ENCODE measurements at regions of chr10 and their contacts with region 1.

Region 1: GRCh38 chr10:96129387-96130325 is at the start of gene ZNF518A:
- DNase-seq: peak; percentile 79 to 97 (median 87)
- ATAC-seq: peak; percentile 82
- H3K4me3 ChIP-seq: peak within 1 kb of the TSS; percentile 67
- H3K4me3 Mint-ChIP-seq: peak within 1 kb of the TSS; percentile 93
- H3K27ac ChIP-seq: peak within 1 kb of the TSS; percentile 93 to 98
- H3K27ac Mint-ChIP-seq: peak within 1 kb of the TSS; percentile 99
- H3K4me1 ChIP-seq: peaks cover 14% of the 10 kb centered on the region
- H3K4me1 Mint-ChIP-seq: peaks cover 27% of the 10 kb centered on the region
- H3K27me3 ChIP-seq: peaks cover 7 to 36% of the 10 kb centered on the region in 2 experiments
- H3K27me3 Mint-ChIP-seq: peaks cover 62% of the 10 kb centered on the region
- CTCF ChIP-seq: no peak
- total RNA-seq, gene ZNF518A: 7.4 to 7.9 TPM

Region 2: DNA sequence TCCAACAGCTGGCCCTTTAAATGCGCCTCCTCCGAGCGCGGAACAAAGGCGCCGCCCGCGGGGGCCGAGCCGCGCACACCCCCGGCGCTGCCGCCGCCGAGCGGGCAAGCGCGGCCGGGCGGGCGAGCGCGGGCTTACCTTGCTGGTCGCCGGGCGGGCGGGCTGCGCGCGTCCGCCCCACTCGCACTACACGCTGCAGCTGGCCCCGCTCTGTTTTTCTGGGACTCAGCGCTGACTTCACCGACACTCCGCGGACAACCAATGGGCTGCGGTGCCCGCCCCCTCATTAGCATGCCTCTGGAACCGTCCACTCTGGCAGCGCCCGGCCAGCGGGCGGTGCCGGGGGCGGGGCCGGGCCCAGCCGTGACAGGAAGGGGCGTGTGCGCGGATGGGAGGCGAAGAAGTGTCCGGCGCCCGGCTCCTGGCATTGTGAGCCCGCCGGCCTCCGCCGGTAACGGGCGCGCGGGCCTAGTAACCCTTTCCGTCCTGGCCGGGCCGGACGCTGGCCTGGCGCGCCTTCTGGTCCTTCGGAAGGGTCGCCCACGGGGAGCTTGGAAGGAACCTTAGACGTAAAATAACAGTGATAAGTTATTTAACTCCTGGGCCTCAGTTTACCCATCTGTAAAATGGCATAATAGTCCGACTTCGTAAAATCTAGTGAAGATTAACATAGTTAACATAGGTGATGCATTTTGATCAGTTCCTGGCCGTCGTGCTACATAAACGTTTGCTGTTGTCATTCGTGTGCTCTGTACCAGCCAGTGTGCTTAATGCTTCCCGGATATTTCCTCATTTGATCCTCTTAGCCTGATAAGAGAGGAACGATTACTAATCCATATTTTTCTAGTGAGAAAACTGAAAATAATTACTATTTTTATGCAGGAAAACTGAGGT is 568.2 kb before region 1 on chr10 and contains the start of gene SORBS1:
- CTCF ChIA-PET with region 1: no interaction called
- POLR2A ChIA-PET with region 1: no interaction called
- intact Hi-C with region 1: loop called in 1 of 2 experiments (anchors 5 kb)
- DNase-seq: peak; percentile 64 to 95 (median 80)
- ATAC-seq: peak; percentile 98
- H3K4me3 ChIP-seq: peak within 1 kb of the TSS; percentile 96
- H3K4me3 Mint-ChIP-seq: peak within 1 kb of the TSS; percentile 100
- H3K27ac ChIP-seq: no peak within 1 kb of the TSS
- H3K27ac Mint-ChIP-seq: peak within 1 kb of the TSS; percentile 72
- H3K4me1 ChIP-seq: peaks cover 14% of the 10 kb centered on the region
- H3K4me1 Mint-ChIP-seq: peaks cover 16% of the 10 kb centered on the region
- H3K27me3 ChIP-seq: peaks cover 0 to 3% of the 10 kb centered on the region in 2 experiments
- H3K27me3 Mint-ChIP-seq: no peaks in the 10 kb centered on the region
- CTCF ChIP-seq: no peak
- total RNA-seq, gene SORBS1: 1.4 to 1.8 TPM

Region 3: DNA sequence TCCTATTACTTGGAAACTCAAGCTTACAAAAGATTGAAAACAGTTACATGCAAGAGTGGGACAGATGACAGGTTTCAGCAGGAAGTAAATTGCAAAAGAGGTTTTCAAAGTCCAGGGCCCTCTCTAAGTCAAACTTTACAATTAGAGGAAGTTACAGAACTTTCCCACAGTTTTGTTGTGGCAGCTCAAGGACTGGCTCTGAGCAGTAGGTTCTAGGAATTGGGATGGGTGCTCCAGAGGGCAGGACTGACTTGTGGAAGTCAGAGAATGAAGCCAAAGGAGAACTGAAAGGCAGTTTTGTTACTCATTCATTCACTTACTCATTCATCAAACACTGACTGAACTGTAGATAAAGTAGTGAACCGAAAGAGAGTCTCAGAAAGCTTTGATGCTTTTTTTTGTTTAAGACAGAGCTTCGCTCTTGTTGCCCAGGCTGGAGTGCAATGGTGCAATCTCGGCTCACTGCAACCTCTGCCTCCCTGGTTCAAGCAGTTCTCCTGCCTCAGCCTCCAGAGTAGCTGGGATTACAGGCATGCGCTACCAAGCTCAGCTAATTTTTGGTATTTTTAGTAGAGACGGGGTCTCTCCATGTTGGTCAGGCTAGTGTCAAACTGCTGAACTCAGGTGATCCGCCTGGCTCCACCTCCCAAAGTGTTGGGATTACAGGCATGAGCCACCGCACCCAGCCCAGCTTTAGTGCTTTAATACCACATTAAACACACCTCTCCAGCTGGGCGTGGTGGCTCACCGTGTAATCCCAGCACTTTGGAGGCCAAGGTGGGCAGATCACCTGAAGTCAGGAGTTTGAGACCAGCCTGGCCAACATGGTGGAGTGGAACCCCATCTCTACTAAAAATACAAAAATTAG is 153.1 kb before region 1 on chr10:
- CTCF ChIA-PET with region 1: no interaction called
- POLR2A ChIA-PET with region 1: no interaction called
- intact Hi-C with region 1: no loop called
- DNase-seq: no peak
- ATAC-seq: no peak
- H3K4me3 ChIP-seq: no peak overlapping the region
- H3K4me3 Mint-ChIP-seq: no peak overlapping the region
- H3K27ac ChIP-seq: no peak overlapping the region
- H3K27ac Mint-ChIP-seq: no peak overlapping the region
- H3K4me1 ChIP-seq: no peaks in the 10 kb centered on the region
- H3K4me1 Mint-ChIP-seq: no peaks in the 10 kb centered on the region
- H3K27me3 ChIP-seq: no peaks in the 10 kb centered on the region
- H3K27me3 Mint-ChIP-seq: no peaks in the 10 kb centered on the region
- CTCF ChIP-seq: no peak

Region 4: GRCh38 chr10:96043033-96043932 is 86.4 kb before region 1 on chr10 and contains the start of gene CCNJ:
- CTCF ChIA-PET with region 1: interaction called, 3 read pairs
- POLR2A ChIA-PET with region 1: interaction called, 32 read pairs
- intact Hi-C with region 1: loop called (anchors 1 to 2 kb)
- DNase-seq: peak; percentile 64 to 91 (median 77)
- ATAC-seq: peak; percentile 84
- H3K4me3 ChIP-seq: peak within 1 kb of the TSS; percentile 98
- H3K4me3 Mint-ChIP-seq: peak within 1 kb of the TSS; percentile 95
- H3K27ac ChIP-seq: peak within 1 kb of the TSS; percentile 52 to 59
- H3K27ac Mint-ChIP-seq: peak within 1 kb of the TSS; percentile 80
- H3K4me1 ChIP-seq: peaks cover 21% of the 10 kb centered on the region
- H3K4me1 Mint-ChIP-seq: peaks cover 54% of the 10 kb centered on the region
- H3K27me3 ChIP-seq: peaks cover 4 to 5% of the 10 kb centered on the region in 2 experiments
- H3K27me3 Mint-ChIP-seq: peaks cover 8% of the 10 kb centered on the region
- CTCF ChIP-seq: no peak
- total RNA-seq, gene CCNJ: 6.9 to 8.0 TPM

Region 5: GRCh38 chr10:96118604-96119450 is 10.8 kb before region 1 on chr10:
- CTCF ChIA-PET with region 1: no interaction called
- POLR2A ChIA-PET with region 1: interaction called, 13 read pairs
- intact Hi-C with region 1: no loop called
- DNase-seq: no peak
- ATAC-seq: no peak
- H3K4me3 ChIP-seq: no peak overlapping the region
- H3K4me3 Mint-ChIP-seq: no peak overlapping the region
- H3K27ac ChIP-seq: no peak overlapping the region
- H3K27ac Mint-ChIP-seq: no peak overlapping the region
- H3K4me1 ChIP-seq: no peaks in the 10 kb centered on the region
- H3K4me1 Mint-ChIP-seq: no peaks in the 10 kb centered on the region
- H3K27me3 ChIP-seq: peaks cover 18 to 46% of the 10 kb centered on the region in 2 experiments
- H3K27me3 Mint-ChIP-seq: peaks cover 94% of the 10 kb centered on the region
- CTCF ChIP-seq: no peak

Region 6: DNA sequence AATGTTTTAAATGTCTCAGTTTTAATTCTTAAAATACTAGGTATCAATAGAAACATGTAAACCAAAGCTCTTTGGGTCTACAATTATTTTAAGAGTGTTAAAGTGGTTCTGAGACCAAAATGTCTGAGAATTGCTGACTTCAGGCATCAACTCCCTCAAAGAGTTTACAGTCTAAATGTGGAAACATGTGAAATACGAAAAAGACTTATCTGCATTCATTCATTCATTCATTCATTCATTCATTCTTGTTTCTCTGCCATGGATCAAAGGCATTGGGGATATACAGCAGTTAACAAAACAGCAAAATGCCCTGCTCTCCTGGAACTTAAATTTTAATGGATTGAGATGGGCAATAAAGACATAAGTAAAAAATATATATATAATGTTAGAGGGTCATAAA is 71.9 kb after region 1 on chr10:
- CTCF ChIA-PET with region 1: no interaction called
- POLR2A ChIA-PET with region 1: no interaction called
- intact Hi-C with region 1: no loop called
- DNase-seq: no peak
- ATAC-seq: no peak
- H3K4me3 ChIP-seq: no peak overlapping the region
- H3K4me3 Mint-ChIP-seq: no peak overlapping the region
- H3K27ac ChIP-seq: no peak overlapping the region
- H3K27ac Mint-ChIP-seq: no peak overlapping the region
- H3K4me1 ChIP-seq: no peaks in the 10 kb centered on the region
- H3K4me1 Mint-ChIP-seq: no peaks in the 10 kb centered on the region
- H3K27me3 ChIP-seq: no peaks in the 10 kb centered on the region
- H3K27me3 Mint-ChIP-seq: peaks cover 18% of the 10 kb centered on the region
- CTCF ChIP-seq: no peak

Region 7: GRCh38 chr10:96586419-96587263 is 457.0 kb after region 1 on chr10 and contains the start of gene TM9SF3:
- CTCF ChIA-PET with region 1: no interaction called
- POLR2A ChIA-PET with region 1: interaction called, 7 read pairs
- intact Hi-C with region 1: loop called in 1 of 2 experiments (anchors 5 kb)
- DNase-seq: peak; percentile 85 to 97 (median 92)
- ATAC-seq: peak; percentile 81
- H3K4me3 ChIP-seq: peak within 1 kb of the TSS; percentile 95
- H3K4me3 Mint-ChIP-seq: peak within 1 kb of the TSS; percentile 95
- H3K27ac ChIP-seq: peak within 1 kb of the TSS; percentile 96 to 98
- H3K27ac Mint-ChIP-seq: no peak within 1 kb of the TSS
- H3K4me1 ChIP-seq: peaks cover 34% of the 10 kb centered on the region
- H3K4me1 Mint-ChIP-seq: peaks cover 44% of the 10 kb centered on the region
- H3K27me3 ChIP-seq: no peaks in the 10 kb centered on the region
- H3K27me3 Mint-ChIP-seq: no peaks in the 10 kb centered on the region
- CTCF ChIP-seq: no peak
- total RNA-seq, gene TM9SF3: 92.4 to 92.7 TPM